Activated CD4-positive, alpha-beta T cell treated with anti-CD3 and anti-CD28 coated beads, Interleukin-2, amount 10 ng/mL, durations not matched to agents 24 days and 14 days (primary cell): ENCODE measurements at regions of chr6 and their contacts with region 1.

Region 1: GRCh38 chr6:42050266-42051032 is at the start of gene TAF8:
- DNase-seq: peak; percentile 97
- H3K4me3 Mint-ChIP-seq: peak within 1 kb of the TSS; percentile 98
- H3K27ac Mint-ChIP-seq: peak within 1 kb of the TSS; percentile 99
- H3K4me1 Mint-ChIP-seq: peaks cover 65% of the 10 kb centered on the region
- H3K27me3 Mint-ChIP-seq: no peaks in the 10 kb centered on the region
- total RNA-seq, gene TAF8: 38.1 and 38.7 TPM in 2 replicates

Region 2: GRCh38 chr6:41518118-41518517 is 532.3 kb before region 1 on chr6:
- intact Hi-C with region 1: no loop called
- DNase-seq: no peak
- H3K4me3 Mint-ChIP-seq: no peak overlapping the region
- H3K27ac Mint-ChIP-seq: no peak overlapping the region
- H3K4me1 Mint-ChIP-seq: no peaks in the 10 kb centered on the region
- H3K27me3 Mint-ChIP-seq: peaks cover 39% of the 10 kb centered on the region

Region 3: GRCh38 chr6:42292004-42292740 is 241.7 kb after region 1 on chr6:
- intact Hi-C with region 1: no loop called
- DNase-seq: no peak
- H3K4me3 Mint-ChIP-seq: no peak overlapping the region
- H3K27ac Mint-ChIP-seq: peak overlapping the region; percentile 82
- H3K4me1 Mint-ChIP-seq: peaks cover 41% of the 10 kb centered on the region
- H3K27me3 Mint-ChIP-seq: no peaks in the 10 kb centered on the region

Region 4: DNA sequence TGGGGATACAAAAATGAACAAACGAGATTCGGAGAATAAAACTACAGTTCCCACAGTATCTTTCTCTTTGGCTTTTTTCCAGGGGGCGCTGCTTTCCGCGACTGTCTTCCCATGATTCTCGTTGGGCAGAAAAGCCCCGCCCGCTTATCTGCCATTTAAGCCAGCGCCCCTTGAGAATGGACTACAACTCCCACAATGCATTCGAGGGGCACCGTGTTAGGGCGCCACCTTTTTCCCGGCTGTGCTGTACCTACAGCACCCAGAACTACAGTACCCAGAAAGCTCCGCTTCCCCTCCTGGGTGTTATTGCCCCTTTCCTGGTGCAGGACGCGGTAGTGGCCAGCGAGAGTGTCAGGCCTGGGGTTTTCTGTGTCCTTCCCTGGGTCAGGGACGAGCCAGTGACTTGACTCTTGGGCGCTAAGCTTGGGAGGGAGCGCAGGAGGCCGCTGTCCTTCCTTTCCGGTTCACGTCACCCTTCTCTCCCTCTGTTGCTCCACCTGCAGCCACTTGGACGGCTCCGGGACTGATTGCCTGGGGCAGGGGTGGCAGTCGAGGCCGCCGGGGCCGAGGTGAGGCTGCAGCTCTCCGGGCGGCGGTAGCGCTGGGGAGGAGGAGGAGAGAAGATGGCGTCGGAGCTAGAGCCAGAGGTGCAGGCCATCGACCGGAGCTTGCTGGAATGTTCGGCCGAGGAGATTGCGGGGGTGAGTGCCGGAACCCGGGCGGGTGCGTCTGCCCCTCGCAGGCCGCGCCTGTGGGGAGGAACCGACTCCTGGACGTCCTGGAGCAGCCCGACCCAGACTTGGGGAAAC is 513.5 kb after region 1 on chr6 and contains the start of gene UBR2:
- intact Hi-C with region 1: loop called (anchors 5 kb)
- DNase-seq: peak; percentile 98
- H3K4me3 Mint-ChIP-seq: peak within 1 kb of the TSS; percentile 99
- H3K27ac Mint-ChIP-seq: peak within 1 kb of the TSS; percentile 93
- H3K4me1 Mint-ChIP-seq: peaks cover 25% of the 10 kb centered on the region
- H3K27me3 Mint-ChIP-seq: peaks cover 2% of the 10 kb centered on the region
- total RNA-seq, gene UBR2: 30.1 and 30.8 TPM in 2 replicates

Region 5: DNA sequence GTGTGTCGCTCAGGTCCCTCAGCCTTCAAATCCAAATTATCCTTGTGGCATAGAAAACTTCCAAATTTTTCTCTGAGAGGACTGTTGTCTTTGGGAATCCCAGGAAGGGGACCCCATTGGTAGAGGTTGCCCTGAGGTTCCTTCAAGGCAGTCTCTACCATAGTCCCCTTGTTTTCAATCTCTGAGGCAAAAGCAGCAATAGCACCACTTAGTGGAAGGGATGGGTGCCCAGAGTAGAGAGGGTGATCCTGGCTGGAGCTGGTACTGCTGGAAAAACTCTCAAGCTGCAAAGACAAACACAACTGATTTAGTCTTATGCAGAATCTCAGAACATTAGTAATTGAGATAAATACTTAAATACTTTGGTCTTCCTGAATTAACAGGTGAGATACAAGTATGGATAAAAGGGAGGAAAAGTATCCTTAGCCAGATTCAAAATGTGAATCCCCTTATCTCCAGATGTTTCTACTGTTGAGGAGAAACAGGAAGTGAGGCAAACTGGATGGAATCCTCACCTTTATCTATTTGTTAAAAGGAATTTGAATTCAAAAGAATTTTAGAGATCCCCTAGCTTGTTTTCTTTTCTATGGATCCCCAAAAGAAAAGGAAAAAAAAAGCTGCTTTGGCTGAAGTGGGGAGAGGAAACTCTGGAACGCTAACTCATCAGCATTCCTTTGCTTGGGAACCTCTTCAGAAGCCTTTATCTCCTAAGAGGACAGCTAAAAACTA is 1305.6 kb after region 1 on chr6:
- intact Hi-C with region 1: no loop called
- DNase-seq: no peak
- H3K4me3 Mint-ChIP-seq: no peak overlapping the region
- H3K27ac Mint-ChIP-seq: no peak overlapping the region
- H3K4me1 Mint-ChIP-seq: peaks cover 2% of the 10 kb centered on the region
- H3K27me3 Mint-ChIP-seq: no peaks in the 10 kb centered on the region